PC-9 (cell line): ENCODE measurements at regions of chr16 and their contacts with region 1.

Region 1: GRCh38 chr16:88737298-88738150 is 31.2 kb downstream of the CTU2 start:
- DNase-seq: peak; percentile 50 to 84
- H3K4me3 ChIP-seq: no peak overlapping the region
- H3K27ac ChIP-seq: no peak overlapping the region
- H3K4me1 ChIP-seq: no peaks in the 10 kb centered on the region
- H3K27me3 ChIP-seq: no peaks in the 10 kb centered on the region
- CTCF ChIP-seq: peak; percentile 96

Region 2: DNA sequence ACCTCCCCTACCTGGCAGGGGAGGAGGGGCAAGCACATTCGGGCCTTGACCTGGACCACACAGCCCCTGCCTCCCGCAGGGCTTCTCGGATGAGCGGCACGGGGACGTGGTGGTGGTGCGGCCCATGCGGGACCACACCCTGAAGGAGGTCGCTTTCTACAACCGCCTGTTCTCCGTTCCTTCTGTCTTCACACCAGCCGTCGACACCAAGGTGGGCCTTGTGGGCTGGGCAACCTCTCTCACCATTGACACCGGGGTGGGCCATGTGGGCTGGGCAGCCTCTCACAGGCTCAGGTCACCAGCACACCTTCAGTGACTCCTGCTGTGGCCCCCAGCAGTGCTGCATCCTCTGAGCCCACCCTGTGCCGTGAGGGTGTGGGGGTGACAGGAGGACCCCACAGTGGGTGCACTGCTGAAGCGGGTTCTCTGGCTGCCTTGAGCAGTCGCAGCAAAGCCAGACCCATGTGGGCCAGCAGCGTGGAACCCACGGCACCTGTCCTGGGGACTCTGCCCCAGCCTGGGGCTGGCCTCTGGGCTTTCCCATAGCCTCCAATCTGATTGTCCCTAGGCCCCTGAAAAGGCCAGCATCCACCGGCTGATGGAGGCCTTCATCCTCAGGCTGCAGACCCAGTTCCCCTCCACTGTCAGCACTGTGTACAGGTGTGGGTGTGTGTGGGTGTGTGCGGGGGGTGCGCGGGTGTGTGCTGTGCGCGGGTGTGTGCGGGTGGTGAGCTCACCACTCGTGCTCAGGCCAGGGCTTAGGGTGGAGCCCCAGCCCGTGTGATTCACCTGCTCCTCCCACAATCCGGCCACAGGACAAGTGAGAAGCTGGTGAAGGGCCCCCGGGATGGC is 23.7 kb before region 1 on chr16:
- CTCF ChIA-PET with region 1: no interaction called
- POLR2A ChIA-PET with region 1: no interaction called
- intact Hi-C with region 1: no loop called
- DNase-seq: no peak
- H3K4me3 ChIP-seq: no peak overlapping the region
- H3K27ac ChIP-seq: no peak overlapping the region
- H3K4me1 ChIP-seq: no peaks in the 10 kb centered on the region
- H3K27me3 ChIP-seq: no peaks in the 10 kb centered on the region
- CTCF ChIP-seq: no peak

Region 3: GRCh38 chr16:88763502-88764053 is 26.1 kb after region 1 on chr16:
- CTCF ChIA-PET with region 1: interaction called, 16 read pairs
- POLR2A ChIA-PET with region 1: interaction called, 3 read pairs
- intact Hi-C with region 1: loop called (anchors 2 kb)
- DNase-seq: peak; percentile 95 to 96
- H3K4me3 ChIP-seq: peak overlapping the region; percentile 49; the same call in 1 of the 2 replicates
- H3K27ac ChIP-seq: peak overlapping the region; percentile 63
- H3K4me1 ChIP-seq: peaks cover 98% of the 10 kb centered on the region
- H3K27me3 ChIP-seq: no peaks in the 10 kb centered on the region
- CTCF ChIP-seq: no peak; the same call in 1 of the 2 replicates

Region 4: DNA sequence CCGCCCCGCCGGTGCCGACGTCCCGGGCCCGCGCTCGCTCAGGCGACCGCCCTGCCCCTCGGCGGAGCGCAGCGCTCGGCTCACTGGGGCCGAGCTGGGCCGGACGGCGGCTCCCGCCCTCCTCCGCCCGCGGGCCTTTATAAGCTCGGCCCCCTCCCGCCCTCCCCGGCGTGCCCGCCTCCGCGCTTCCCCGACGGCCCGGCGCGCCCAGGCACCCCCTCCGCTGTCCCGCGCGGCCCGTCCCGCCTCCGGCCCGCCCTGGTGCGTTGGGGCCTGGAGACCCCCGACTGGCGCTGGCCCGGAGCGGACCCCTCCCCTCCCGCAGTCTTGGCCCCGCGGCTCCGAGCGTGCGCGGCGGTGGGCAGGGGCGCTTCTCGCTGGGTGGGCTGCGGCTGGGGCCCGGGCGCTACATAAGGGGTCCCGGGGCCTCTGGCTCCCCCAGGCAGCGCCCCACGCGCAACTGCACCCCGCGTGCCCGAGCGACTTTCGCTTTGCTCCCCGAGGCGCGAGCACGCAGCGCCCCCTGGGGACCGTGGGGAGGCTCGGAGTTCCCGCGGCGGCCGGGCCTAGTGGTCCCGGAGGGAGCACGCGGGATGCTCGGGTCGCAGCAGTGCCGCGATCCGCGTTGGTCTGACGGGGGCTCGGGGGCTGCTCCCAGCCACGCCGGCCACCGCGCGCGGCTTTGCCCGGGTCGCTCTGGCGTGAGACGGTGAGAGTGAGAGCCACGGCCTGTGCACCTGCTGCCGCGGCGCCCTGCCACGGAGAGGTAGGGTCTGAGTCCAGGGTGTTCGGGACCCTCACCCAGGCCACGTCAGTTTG is 47.8 kb after region 1 on chr16 and contains the start of gene PIEZO1:
- CTCF ChIA-PET with region 1: interaction called, 20 read pairs
- POLR2A ChIA-PET with region 1: interaction called, 5 read pairs
- intact Hi-C with region 1: loop called (anchors 1 kb)
- DNase-seq: peak in 1 of 2 experiments; percentile 71
- H3K4me3 ChIP-seq: peak within 1 kb of the TSS; percentile 71
- H3K27ac ChIP-seq: peak within 1 kb of the TSS; percentile 74
- H3K4me1 ChIP-seq: peaks cover 31% of the 10 kb centered on the region
- H3K27me3 ChIP-seq: no peaks in the 10 kb centered on the region
- CTCF ChIP-seq: peak; percentile 87
- total RNA-seq, gene PIEZO1: 391 and 426 TPM in 2 replicates

Region 5: GRCh38 chr16:88803264-88803987 is 65.9 kb after region 1 on chr16 and contains the start of gene CDT1:
- CTCF ChIA-PET with region 1: interaction called, 7 read pairs
- POLR2A ChIA-PET with region 1: interaction called, 5 read pairs
- intact Hi-C with region 1: loop called (anchors 5 kb)
- DNase-seq: peak in 1 of 2 experiments; percentile 89
- H3K4me3 ChIP-seq: peak within 1 kb of the TSS; percentile 82
- H3K27ac ChIP-seq: peak within 1 kb of the TSS; percentile 58
- H3K4me1 ChIP-seq: peaks cover 15% of the 10 kb centered on the region
- H3K27me3 ChIP-seq: no peaks in the 10 kb centered on the region
- CTCF ChIP-seq: no peak
- total RNA-seq, gene CDT1: 73.2 and 95.4 TPM in 2 replicates

Region 6: GRCh38 chr16:88811769-88812512 is 74.4 kb after region 1 on chr16 and contains the start of gene APRT:
- CTCF ChIA-PET with region 1: interaction called, 12 read pairs
- POLR2A ChIA-PET with region 1: interaction called, 5 read pairs
- intact Hi-C with region 1: no loop called
- DNase-seq: peak; percentile 85 to 99
- H3K4me3 ChIP-seq: peak within 1 kb of the TSS; percentile 91
- H3K27ac ChIP-seq: peak within 1 kb of the TSS; percentile 78
- H3K4me1 ChIP-seq: peaks cover 16% of the 10 kb centered on the region; the same call in 1 of the 2 replicates
- H3K27me3 ChIP-seq: no peaks in the 10 kb centered on the region
- CTCF ChIP-seq: peak; percentile 45; the same call in 1 of the 2 replicates
- total RNA-seq, gene APRT: 213 and 226 TPM in 2 replicates

Region 7: GRCh38 chr16:89418352-89418751 is 680.8 kb after region 1 on chr16:
- CTCF ChIA-PET with region 1: no interaction called
- POLR2A ChIA-PET with region 1: interaction called, 12 read pairs
- intact Hi-C with region 1: no loop called
- DNase-seq: no peak
- H3K4me3 ChIP-seq: no peak overlapping the region
- H3K27ac ChIP-seq: no peak overlapping the region
- H3K4me1 ChIP-seq: no peaks in the 10 kb centered on the region
- H3K27me3 ChIP-seq: no peaks in the 10 kb centered on the region
- CTCF ChIP-seq: no peak

Region 8: DNA sequence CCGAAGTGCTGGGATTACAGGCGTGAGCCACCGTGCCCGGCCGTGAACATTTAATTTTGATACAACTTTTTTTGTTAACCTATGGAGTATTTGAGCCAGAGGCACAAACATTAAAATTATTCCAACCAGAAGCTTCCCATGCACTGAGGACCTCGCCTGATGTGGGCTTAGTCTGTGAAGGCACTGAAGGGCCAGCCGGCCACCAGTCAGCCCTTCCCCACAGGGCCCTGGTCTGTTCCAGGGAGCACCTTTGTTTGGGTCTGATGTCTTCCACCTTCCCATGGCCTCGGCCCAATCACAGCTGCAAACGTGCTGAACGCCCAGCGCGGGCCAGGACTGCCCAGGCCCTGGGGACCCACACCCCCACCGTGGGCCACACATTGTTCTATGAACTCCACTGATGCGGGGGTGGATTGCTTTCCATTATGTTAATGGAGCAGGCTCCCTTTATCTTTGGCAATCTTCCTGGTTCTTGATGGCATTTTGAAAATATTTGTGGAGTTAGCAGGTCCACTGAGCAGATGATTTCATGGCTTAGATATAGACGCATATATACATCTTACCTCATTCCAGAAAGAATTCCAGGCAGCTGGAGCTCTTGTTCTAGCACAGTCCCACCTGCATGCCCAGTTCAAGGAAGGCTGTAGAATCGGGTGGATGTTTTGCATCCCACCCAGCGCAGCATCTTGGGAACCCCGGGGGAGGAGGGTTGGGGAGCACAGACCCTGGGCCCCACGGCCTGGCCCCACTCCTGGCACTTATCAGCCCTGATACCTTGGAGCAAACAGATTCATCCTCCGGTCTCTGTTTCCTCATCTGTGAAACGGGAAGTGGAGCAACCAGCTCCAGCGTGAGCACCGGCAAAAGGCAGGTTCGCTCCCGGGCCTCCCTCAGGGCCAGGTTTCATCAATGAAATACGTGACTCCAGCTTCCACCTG is 1105.2 kb after region 1 on chr16:
- CTCF ChIA-PET with region 1: no interaction called
- POLR2A ChIA-PET with region 1: no interaction called
- intact Hi-C with region 1: no loop called
- DNase-seq: peak in 1 of 2 experiments; percentile 63
- H3K4me3 ChIP-seq: no peak overlapping the region
- H3K27ac ChIP-seq: no peak overlapping the region
- H3K4me1 ChIP-seq: peaks cover 11% of the 10 kb centered on the region
- H3K27me3 ChIP-seq: no peaks in the 10 kb centered on the region
- CTCF ChIP-seq: no peak